Heart right ventricle (tissue), 16 donors: ENCODE measurements at regions of chr5 and their contacts with region 1.

Region 1: GRCh38 chr5:16616536-16617273 is at the start of gene RETREG1:
- DNase-seq: peak; percentile 68 to 76
- ATAC-seq: peak; percentile 81 to 91 (median 88)
- H3K4me3 ChIP-seq: peak within 1 kb of the TSS; percentile 59 to 94 (median 74)
- H3K27ac ChIP-seq: peak within 1 kb of the TSS; percentile 47 to 88 (median 76)
- H3K4me1 ChIP-seq: peaks cover 0 to 24% (median 12%) of the 10 kb centered on the region in 9 donors
- H3K27me3 ChIP-seq: peaks cover 0 to 15% (median 0%) of the 10 kb centered on the region in 7 donors
- CTCF ChIP-seq: no peak
- total RNA-seq, gene RETREG1: 156 to 337 (median 216) TPM

Region 2: GRCh38 chr5:16568875-16569580 is 47.7 kb before region 1 on chr5:
- intact Hi-C with region 1: loop called in 1 of 10 experiments (anchors 5 kb)
- DNase-seq: peak; percentile 34 to 37
- ATAC-seq: peak in 3 of 8 donors; percentile 20 to 89 (median 70)
- H3K4me3 ChIP-seq: no peak overlapping the region
- H3K27ac ChIP-seq: peak overlapping the region in 1 of 10 donors; percentile 13
- H3K4me1 ChIP-seq: peaks cover 0 to 22% (median 7%) of the 10 kb centered on the region in 9 donors
- H3K27me3 ChIP-seq: no peaks in the 10 kb centered on the region
- CTCF ChIP-seq: no peak

Region 3: DNA sequence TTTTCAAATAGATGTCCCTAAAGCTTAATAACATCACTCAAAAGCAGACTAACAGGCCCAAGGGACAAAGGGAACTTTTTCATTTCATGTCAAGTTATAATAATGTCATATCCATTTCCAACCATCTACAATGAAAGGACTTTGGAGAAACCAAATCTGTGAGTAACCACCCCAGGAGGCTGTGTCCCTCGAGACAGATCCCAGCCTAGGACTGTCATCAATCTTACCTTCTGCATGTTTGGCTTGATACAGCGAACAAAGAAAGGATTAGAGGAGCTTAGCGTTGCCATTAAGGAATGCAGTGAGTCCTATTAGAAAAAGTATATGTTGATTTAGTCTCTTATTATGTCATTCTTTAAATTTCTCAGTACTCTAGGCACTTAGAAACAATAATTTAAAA is 137.9 kb after region 1 on chr5:
- intact Hi-C with region 1: no loop called
- DNase-seq: no peak
- ATAC-seq: no peak
- H3K4me3 ChIP-seq: no peak overlapping the region
- H3K27ac ChIP-seq: no peak overlapping the region
- H3K4me1 ChIP-seq: no peaks in the 10 kb centered on the region
- H3K27me3 ChIP-seq: no peaks in the 10 kb centered on the region
- CTCF ChIP-seq: no peak